Cardiac septum (tissue), 1 donor: ENCODE measurements at regions of chr14 and their contacts with region 1.

Region 1: DNA sequence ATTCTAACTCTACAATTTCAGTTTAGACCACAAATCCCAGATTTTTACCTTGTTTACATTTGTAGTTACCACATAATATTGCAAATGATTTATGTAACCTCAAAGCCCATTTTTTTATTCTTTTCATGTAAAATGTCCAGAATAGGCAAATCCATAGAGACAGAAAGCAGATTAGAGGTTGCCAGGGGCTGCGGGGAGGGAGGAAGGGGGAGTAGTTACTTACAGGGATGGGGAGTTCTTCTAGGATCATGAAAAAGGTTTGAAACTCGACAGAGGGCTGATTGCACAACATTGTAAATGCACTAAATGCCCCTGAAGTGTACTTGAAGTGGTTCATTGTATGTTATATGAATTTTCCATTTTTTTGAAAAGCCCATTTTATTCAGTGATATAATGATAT is 66.5 kb downstream of the PPP2R5C start:
- DNase-seq: no peak

Region 2: DNA sequence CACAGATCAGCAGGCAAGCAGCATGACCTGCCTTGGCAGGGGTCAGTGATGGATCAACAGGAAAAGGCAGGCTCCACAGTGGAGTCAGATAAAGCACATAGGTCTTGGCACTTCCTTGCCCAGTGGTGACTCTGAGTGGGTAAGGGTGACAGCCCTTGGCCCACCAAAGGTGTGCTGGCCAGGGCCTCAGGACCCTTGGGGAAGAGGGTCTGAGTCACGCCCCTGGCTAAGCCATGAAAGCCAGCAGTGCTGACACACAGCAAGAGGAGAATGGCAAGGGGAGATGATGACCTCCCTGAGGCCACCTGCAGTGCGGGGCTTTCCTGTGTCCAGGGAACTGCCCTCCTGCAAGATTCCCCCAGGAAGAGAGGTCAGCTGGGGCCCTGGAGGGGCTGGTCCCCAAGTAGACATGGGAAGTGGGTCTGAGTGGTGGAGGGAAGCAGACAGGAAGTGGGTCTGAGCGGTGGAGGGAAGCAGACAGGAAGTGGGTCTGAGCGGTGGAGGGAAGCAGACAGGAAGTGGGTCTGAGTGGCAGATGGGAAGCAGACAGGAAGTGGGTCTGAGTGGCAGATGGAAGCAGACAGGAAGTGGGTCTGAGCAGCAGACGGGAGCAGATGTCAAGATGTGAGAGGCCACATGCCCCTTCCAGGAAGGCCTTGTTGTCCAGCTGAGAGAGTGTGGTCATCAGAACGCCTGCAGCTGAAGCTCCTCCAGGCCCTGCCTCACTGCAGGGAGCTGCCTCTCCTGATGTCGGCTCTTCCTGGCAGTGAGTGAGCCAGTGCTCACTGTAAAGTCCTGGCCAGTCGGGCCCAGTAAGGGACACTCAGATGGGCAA is 231.9 kb before region 1 on chr14:
- intact Hi-C with region 1: no loop called
- DNase-seq: peak; percentile 67

Region 3: DNA sequence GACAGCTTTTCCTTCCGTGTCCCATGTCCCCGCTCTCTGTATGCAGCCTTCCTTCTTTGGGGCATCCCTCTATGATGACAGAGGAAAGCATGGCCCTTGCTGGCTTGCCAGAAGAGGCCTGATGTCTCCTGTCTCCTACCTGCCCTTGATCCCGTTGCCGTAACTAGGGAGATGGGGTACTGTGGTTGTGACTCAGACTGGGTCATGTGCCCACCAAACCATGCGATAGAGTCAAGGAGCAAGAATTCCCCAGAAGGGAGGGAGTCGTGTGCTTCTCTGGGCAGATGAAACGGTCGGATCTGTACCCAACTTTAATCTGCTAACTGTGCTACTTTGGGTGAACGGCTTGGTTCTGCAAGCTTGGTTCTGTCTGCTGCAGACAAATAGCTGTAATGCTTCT is 37.2 kb after region 1 on chr14:
- intact Hi-C with region 1: loop called (anchors 5 kb)
- DNase-seq: no peak